GM23248 (cell line): ENCODE measurements at regions of chr18 and their contacts with region 1.

Region 1: DNA sequence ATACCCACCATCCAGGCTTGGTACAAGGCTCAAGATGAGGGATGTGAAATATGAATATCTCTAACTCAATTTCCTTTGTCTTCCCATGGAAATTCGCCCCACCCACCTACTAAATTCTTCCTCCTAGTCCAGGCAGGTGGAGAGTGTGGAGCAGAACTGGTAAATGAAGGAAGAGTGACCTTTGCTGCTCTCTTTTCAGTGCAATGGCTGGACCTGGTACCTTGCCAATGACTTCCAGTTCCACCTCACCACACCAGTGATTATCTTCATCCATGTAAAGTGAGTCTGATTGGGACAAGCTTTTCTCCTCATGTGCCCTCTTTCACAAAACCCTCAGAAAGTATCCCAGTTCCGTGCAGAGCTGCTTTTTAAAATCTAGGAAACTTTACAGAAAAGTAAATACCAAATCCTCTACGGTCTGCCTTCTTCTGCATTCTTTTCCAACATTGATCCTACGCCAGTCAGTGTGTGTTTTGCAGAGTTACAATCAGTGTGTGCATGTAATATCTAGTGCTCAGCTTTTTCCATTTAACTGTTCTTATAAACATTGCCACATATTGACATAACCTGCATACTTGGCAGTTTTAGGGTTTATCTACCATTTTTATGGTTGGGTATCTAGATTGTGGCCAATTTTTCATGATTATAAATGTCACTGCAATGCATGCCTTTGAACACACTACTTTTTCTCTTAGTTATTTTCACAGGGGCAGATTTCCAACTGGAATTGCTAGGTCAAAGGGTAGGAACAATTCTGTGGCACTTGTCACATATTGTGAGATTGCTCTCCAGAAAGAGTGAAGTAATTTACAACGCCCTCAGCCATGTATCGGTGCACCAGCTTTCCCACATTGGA is 86.5 kb upstream of the SEC11C start:
- DNase-seq: no peak
- H3K4me3 ChIP-seq: no peak overlapping the region
- H3K27ac ChIP-seq: no peak overlapping the region
- H3K4me1 ChIP-seq: peaks cover 8% of the 10 kb centered on the region
- H3K27me3 ChIP-seq: no peaks in the 10 kb centered on the region

Region 2: GRCh38 chr18:58781627-58782194 is 271.5 kb before region 1 on chr18:
- in situ Hi-C with region 1: loop called (anchors 5 kb)
- DNase-seq: peak; percentile 84
- H3K4me3 ChIP-seq: no peak overlapping the region
- H3K27ac ChIP-seq: no peak overlapping the region
- H3K4me1 ChIP-seq: peaks cover 13% of the 10 kb centered on the region
- H3K27me3 ChIP-seq: no peaks in the 10 kb centered on the region

Region 3: GRCh38 chr18:59109375-59109774 is 56.2 kb after region 1 on chr18:
- in situ Hi-C with region 1: no loop called
- DNase-seq: peak; percentile 26
- H3K4me3 ChIP-seq: no peak overlapping the region
- H3K27ac ChIP-seq: no peak overlapping the region
- H3K4me1 ChIP-seq: no peaks in the 10 kb centered on the region
- H3K27me3 ChIP-seq: peaks cover 65% of the 10 kb centered on the region

Region 4: GRCh38 chr18:59268721-59269562 is 215.7 kb after region 1 on chr18:
- in situ Hi-C with region 1: no loop called
- DNase-seq: peak; percentile 52
- H3K4me3 ChIP-seq: no peak overlapping the region
- H3K27ac ChIP-seq: no peak overlapping the region
- H3K4me1 ChIP-seq: no peaks in the 10 kb centered on the region
- H3K27me3 ChIP-seq: peaks cover 96% of the 10 kb centered on the region